ENCODE measurements at regions of chr22 and their contacts with region 1.

Region 1: GRCh38 chr22:48734359-48734758 is 1093.3 kb downstream of the BRD1 start:
- DNase-seq: peak; percentile 26

Region 2: GRCh38 chr22:48567213-48567975 is 167.0 kb before region 1 on chr22:
- intact Hi-C with region 1: no loop called
- DNase-seq: no peak

Region 3: DNA sequence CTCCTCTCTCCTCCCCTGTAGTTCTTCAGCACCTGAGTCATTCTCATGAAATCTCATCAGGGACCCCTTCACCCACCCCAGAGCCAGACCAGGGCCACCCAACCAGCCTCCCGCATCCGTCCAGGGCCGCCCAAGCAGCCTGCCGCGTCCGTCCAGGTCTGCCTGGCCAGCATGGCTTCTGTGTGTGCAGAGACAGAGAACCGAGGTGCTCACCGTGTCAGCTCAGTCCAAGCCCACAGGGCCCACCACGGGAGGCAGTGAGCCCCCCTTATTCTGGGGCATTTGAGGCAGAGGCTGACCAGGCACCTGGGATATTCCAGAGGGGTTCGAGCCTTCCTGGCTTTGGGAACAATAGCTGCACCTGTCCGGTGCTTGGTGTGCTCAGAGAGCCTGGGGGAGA is 23.9 kb before region 1 on chr22:
- intact Hi-C with region 1: loop called in 1 of 2 experiments (anchors 1 kb)
- DNase-seq: peak; percentile 62

Region 4: GRCh38 chr22:48782811-48783511 is 48.6 kb after region 1 on chr22:
- intact Hi-C with region 1: no loop called
- DNase-seq: peak; percentile 44

Measured in posterior vena cava (tissue), 2 donors.